ENCODE measurements at regions of chr9 and their contacts with region 1.

Region 1: DNA sequence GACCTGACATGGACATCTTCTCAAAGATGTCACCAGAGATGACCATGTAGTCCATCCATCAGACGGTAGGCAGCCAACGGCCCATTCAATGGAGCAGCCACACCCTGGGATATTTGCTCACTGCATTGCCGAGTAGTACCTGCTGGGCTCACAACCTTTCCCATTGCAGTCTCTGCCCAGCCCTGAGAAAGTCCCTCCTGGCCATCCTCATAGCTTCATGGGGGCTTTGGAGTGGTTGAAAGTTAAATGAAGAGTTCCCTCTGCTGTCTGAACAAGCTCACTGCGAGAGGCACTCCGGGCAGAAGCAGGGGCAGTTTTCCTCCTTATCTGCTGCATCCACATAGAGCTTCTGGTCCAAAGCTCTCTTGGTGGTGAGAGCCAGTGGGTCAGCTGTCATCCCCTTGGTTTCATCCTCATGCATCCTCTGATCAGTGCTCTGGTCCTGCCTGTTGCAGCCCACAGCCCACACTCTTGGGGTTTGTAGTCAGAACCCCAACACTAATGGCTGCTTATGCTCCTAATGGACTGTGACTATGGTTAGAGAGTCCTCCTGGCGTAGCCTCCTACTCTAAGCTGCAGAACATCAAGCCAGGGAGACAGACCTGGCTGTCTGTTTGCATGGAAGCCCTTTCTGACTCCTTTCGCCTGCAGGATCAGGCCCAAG is 23.4 kb downstream of the TNFSF8 start:
- DNase-seq: peak; percentile 55
- ATAC-seq: peak; percentile 86
- H3K4me3 ChIP-seq: no peak overlapping the region
- H3K27ac ChIP-seq: no peak overlapping the region
- H3K4me1 ChIP-seq: peaks cover 24% of the 10 kb centered on the region
- H3K27me3 ChIP-seq: no peaks in the 10 kb centered on the region
- CTCF ChIP-seq: peak; percentile 82
- EP300 ChIP-seq: no peak
- POLR2A ChIP-seq: no peak
- RAD21 ChIP-seq: peak; percentile 69

Region 2: DNA sequence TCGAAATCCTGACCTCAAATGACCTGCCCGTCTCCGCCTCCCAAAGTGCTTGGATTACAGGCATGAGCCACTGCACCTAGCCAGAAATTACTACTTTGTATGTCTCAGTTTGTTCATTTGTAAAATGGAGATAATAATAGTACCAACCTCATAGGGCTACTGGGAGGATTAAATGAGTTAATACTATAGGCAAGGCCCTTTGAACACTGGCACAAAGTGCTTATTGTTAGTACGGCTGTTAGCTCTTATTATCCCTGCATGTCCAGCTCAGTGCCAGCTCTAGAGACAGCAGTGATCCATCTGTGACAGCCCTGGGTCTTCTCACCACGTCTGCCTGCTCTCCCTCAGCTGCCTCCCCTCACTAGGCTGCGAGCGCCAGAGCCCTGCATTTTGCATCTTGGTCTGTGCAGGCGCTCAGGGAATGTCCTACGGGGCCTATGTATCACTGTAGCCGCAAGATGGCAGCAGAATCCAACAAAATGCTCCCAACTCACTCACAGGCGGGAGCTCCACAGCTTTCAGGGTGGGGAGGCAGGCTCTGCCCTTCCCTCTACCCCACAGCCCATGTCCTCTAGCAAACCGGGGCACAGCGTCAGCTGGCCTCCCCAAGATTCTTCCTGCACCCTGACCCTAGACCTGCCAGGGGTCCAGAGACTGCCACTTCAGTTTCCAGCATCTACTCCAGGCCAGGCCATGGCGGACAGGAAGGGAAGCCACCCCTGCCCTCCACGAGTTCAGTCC is 501.6 kb before region 1 on chr9:
- CTCF ChIA-PET with region 1: no interaction called
- POLR2A ChIA-PET with region 1: no interaction called
- in situ Hi-C with region 1: loop called (anchors 25 kb)
- intact Hi-C with region 1: loop called (anchors 5 kb)
- DNase-seq: peak; percentile 72
- ATAC-seq: peak; percentile 88
- H3K4me3 ChIP-seq: no peak overlapping the region
- H3K27ac ChIP-seq: no peak overlapping the region
- H3K4me1 ChIP-seq: peaks cover 29% of the 10 kb centered on the region
- H3K27me3 ChIP-seq: no peaks in the 10 kb centered on the region
- CTCF ChIP-seq: peak; percentile 95
- EP300 ChIP-seq: no peak
- POLR2A ChIP-seq: no peak
- RAD21 ChIP-seq: peak; percentile 94

Region 3: DNA sequence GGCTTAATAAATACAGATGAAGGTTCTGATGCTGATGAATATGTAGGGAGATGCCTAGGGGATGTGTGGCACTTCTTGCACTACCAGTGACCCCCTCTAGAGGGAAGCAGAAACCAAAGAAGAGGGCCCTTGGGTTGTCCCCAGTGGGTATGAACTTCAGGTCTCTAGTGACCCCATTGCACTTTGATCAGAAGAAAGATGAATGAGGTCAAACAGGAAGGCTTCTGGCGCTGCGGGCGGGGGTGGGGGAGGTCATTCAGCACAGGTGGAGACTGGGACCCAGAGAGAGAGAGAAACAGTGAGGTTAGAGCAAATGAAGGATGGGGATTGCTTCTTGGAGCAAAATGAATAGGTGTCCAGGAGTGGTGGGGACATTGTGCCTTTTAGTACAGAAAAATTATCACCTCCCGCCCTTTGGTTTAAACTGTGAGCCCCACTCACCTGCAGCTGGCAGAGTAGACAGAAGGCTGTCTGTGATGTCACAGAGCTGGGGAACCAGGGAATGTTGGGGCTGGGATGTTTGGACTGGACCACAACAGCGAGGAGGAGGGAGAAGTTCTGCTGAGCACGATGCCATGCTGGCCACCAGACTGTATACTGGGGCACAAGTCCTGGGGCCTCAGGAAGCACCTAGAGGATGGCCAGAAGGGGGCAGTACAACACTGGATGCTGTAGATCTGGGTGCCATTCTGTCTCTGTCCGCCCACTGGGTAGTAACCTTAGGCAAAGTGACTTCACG is 225.3 kb before region 1 on chr9 and contains the start of gene TEX48:
- CTCF ChIA-PET with region 1: interaction called, 22 read pairs
- POLR2A ChIA-PET with region 1: no interaction called
- in situ Hi-C with region 1: loop called (anchors 5 kb)
- intact Hi-C with region 1: loop called (anchors 1 kb)
- DNase-seq: peak; percentile 80
- ATAC-seq: peak; percentile 99
- H3K4me3 ChIP-seq: no peak within 1 kb of the TSS
- H3K27ac ChIP-seq: no peak within 1 kb of the TSS
- H3K4me1 ChIP-seq: peaks cover 8% of the 10 kb centered on the region
- H3K27me3 ChIP-seq: no peaks in the 10 kb centered on the region
- CTCF ChIP-seq: peak; percentile 91
- EP300 ChIP-seq: no peak
- POLR2A ChIP-seq: no peak
- RAD21 ChIP-seq: peak; percentile 84
- total RNA-seq, gene TEX48: not detected in 2 replicates

Region 4: DNA sequence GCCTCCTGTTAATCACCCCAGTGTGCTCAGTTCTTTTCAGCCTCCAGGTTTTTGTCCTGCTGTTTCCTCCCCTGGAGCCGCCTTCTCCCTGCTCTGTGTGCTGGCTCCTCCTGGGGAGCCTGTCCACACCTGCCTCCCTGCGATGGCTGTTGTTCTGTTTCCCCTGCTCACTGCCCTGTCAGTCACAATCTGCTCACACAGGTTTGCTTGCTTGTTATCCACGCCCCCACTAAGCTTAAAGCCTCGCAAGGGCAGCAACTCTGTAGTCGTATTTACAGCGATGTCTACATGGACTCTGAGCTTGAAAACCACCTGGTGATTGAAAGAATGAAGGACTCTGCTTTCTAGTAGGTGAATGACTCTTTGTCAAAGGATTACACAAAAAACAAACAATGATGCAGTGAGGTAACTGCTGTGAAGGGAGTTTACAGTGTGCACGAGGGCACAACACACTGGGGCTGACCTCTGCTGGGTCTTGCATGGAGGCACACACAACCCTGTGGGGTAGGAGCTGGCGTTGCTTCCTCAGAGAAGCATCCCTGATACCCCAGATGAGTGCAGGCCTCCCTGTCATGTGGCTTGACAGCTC is 185.5 kb before region 1 on chr9:
- CTCF ChIA-PET with region 1: no interaction called
- POLR2A ChIA-PET with region 1: no interaction called
- in situ Hi-C with region 1: no loop called
- intact Hi-C with region 1: loop called (anchors 1 kb)
- DNase-seq: peak; percentile 99
- ATAC-seq: peak; percentile 98
- H3K4me3 ChIP-seq: peak overlapping the region in 1 of 3 experiments; percentile 59; a peak in 2 of 6 replicates
- H3K27ac ChIP-seq: peak overlapping the region; percentile 64
- H3K4me1 ChIP-seq: peaks cover 47% of the 10 kb centered on the region
- H3K27me3 ChIP-seq: peaks cover 0 to 5% of the 10 kb centered on the region in 2 experiments; a peak in 3 of 5 replicates
- CTCF ChIP-seq: peak; percentile 65
- EP300 ChIP-seq: peak; percentile 91 to 95
- POLR2A ChIP-seq: peak; percentile 39 to 50; a peak in 2 of 4 replicates
- RAD21 ChIP-seq: peak; percentile 72

Region 5: DNA sequence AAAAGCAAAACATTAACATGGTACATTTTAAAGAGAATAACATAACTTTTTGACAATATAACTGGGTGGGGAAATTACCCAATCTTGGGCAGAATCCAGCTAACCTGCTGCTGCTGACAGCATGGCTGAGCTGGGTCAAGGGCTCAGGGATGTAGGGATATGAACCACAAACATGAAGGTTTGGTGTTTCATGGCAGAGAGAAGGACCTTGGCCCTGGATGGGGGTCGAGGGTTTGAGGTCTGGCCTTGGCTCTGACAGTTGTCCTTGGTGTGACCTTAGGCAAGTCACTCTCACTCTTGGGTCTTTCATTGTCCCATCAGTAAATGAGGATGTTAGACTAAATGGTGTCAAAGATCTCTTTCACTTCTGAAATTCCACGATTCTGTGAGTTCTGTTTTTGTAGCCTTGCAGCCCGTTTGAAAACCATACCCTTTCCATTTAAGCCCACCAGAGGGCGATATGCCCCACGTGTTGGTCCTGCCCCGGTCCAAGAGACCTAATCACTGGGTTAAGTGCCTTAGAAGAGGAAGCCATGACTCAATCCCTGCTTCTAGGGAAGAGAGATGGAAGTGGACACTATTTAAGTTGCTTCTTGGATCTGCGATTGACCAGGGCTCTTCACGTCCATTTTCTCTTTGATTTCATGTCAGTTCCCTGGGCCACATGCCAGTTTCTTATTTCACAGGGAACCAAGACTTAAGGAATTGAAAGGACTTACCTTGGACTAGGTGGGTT is 168.3 kb before region 1 on chr9:
- CTCF ChIA-PET with region 1: interaction called, 35 read pairs
- POLR2A ChIA-PET with region 1: interaction called, 3 read pairs
- in situ Hi-C with region 1: loop called (anchors 5 kb)
- intact Hi-C with region 1: loop called (anchors 1 kb)
- DNase-seq: peak; percentile 46
- ATAC-seq: peak; percentile 93
- H3K4me3 ChIP-seq: no peak overlapping the region
- H3K27ac ChIP-seq: no peak overlapping the region
- H3K4me1 ChIP-seq: peaks cover 5% of the 10 kb centered on the region; the same call in 1 of the 2 replicates
- H3K27me3 ChIP-seq: no peaks in the 10 kb centered on the region
- CTCF ChIP-seq: peak; percentile 90
- EP300 ChIP-seq: no peak
- POLR2A ChIP-seq: no peak
- RAD21 ChIP-seq: peak; percentile 85

Region 6: DNA sequence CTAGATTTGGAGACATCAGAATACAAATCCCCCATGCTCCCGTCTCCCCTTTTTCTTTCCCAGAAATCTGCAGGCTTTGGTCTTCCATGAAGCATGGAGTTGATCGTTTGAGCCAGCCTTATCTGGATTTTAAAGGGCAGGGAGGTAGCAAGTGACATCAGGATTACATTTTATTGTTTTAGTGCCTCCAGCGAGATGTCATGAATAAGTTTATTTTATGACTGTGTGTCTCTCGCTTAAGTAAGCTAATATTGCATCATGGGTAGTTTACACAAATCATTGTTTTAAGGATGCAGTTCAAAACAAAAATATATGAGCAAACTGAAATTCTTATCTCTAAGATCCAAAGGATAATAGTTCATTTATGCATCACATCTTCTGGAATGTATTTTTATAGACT is 74.0 kb after region 1 on chr9:
- CTCF ChIA-PET with region 1: no interaction called
- POLR2A ChIA-PET with region 1: no interaction called
- in situ Hi-C with region 1: no loop called
- intact Hi-C with region 1: no loop called
- DNase-seq: no peak
- ATAC-seq: no peak
- H3K4me3 ChIP-seq: no peak overlapping the region
- H3K27ac ChIP-seq: no peak overlapping the region
- H3K4me1 ChIP-seq: no peaks in the 10 kb centered on the region
- H3K27me3 ChIP-seq: no peaks in the 10 kb centered on the region
- CTCF ChIP-seq: no peak
- EP300 ChIP-seq: no peak
- POLR2A ChIP-seq: no peak
- RAD21 ChIP-seq: no peak

Region 7: DNA sequence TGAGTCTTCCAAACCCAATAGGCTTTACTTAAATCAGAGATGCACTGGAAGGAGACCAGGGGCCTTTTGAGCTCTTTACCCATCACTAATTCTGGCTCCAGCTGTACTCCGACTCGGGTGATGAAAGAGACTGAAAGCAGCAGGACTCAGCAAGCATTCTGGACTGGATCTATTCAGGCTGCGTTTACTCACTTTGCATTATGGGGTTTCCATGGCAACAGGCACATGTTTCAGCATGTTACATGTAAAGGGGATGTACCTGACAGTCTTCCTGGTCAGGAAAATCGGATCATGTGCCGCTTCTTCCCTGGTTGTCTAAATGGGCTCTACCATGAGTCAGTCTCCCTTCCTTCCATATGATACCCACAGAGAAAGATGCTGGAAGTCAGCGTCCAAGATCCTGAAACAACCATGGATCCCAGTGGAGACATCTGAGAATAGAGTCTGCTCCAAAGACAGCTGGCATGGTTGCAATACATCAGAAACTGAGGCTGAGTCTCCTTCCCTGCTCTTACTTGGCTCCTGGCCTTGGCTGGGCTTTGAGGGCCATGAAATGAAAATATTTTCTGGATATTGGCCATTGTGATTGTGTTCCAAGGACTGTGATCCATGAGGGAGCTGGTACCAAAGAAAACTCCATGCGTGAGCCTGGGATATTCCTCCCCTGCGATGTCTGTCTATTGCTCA is 313.4 kb after region 1 on chr9:
- CTCF ChIA-PET with region 1: no interaction called
- POLR2A ChIA-PET with region 1: no interaction called
- in situ Hi-C with region 1: no loop called
- intact Hi-C with region 1: no loop called
- DNase-seq: no peak
- ATAC-seq: no peak
- H3K4me3 ChIP-seq: no peak overlapping the region
- H3K27ac ChIP-seq: no peak overlapping the region
- H3K4me1 ChIP-seq: no peaks in the 10 kb centered on the region
- H3K27me3 ChIP-seq: no peaks in the 10 kb centered on the region
- CTCF ChIP-seq: no peak
- EP300 ChIP-seq: no peak
- POLR2A ChIP-seq: no peak
- RAD21 ChIP-seq: no peak

Region 8: DNA sequence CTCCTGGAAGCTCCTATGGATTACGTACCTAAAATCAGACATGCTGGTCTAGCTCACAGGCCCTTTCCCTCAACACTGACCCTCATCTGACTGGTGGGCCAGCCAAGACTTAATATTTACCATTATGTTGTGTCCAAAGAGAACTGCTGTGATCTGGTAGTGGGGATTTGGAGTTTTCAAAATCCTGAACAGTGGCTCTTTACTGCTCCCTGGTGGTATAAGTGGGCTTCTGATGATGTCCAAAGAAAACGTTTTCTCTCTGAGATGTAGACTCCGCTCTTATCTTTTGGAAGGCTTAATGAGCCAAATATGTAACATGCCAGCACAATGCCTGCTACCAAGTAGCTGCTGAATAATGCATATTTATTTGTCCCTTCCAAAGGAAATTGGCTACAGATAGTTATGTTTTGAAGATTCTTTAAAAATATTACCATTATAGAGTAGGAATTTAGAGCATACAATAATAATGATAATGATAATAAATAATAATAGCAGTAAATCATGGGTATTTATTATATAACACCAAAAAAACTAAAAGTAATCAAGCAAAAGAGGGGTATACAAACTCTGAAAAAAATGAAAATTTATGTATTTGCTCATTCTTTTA is 617.5 kb after region 1 on chr9:
- CTCF ChIA-PET with region 1: no interaction called
- POLR2A ChIA-PET with region 1: no interaction called
- in situ Hi-C with region 1: loop called (anchors 25 kb)
- intact Hi-C with region 1: no loop called
- DNase-seq: peak; percentile 32
- ATAC-seq: peak; percentile 55; the same call in 2 of the 3 replicates
- H3K4me3 ChIP-seq: no peak overlapping the region
- H3K27ac ChIP-seq: no peak overlapping the region
- H3K4me1 ChIP-seq: no peaks in the 10 kb centered on the region
- H3K27me3 ChIP-seq: no peaks in the 10 kb centered on the region; a peak in 1 of 5 replicates
- CTCF ChIP-seq: peak; percentile 71
- EP300 ChIP-seq: no peak
- POLR2A ChIP-seq: no peak
- RAD21 ChIP-seq: peak; percentile 60

Measured in HepG2 (cell line).